PC-3 (cell line): ENCODE measurements at regions of chr9 and their contacts with region 1.

Region 1: GRCh38 chr9:107557231-107557990 is 67.8 kb upstream of the KLF4 start:
- DNase-seq: peak; percentile 88
- ATAC-seq: peak; percentile 88
- H3K4me3 ChIP-seq: peak overlapping the region; percentile 21; the same call in 1 of the 2 replicates
- H3K27ac ChIP-seq: peak overlapping the region; percentile 98
- H3K4me1 ChIP-seq: peaks cover 25% of the 10 kb centered on the region
- H3K27me3 ChIP-seq: no peaks in the 10 kb centered on the region
- CTCF ChIP-seq: no peak

Region 2: GRCh38 chr9:107597743-107598217 is 40.4 kb after region 1 on chr9:
- CTCF ChIA-PET with region 1: no interaction called
- POLR2A ChIA-PET with region 1: no interaction called
- intact Hi-C with region 1: no loop called
- DNase-seq: no peak
- ATAC-seq: no peak
- H3K4me3 ChIP-seq: no peak overlapping the region
- H3K27ac ChIP-seq: no peak overlapping the region
- H3K4me1 ChIP-seq: no peaks in the 10 kb centered on the region
- H3K27me3 ChIP-seq: no peaks in the 10 kb centered on the region
- CTCF ChIP-seq: no peak

Region 3: GRCh38 chr9:107612136-107612535 is 54.7 kb after region 1 on chr9:
- CTCF ChIA-PET with region 1: no interaction called
- POLR2A ChIA-PET with region 1: interaction called, 14 read pairs
- intact Hi-C with region 1: no loop called
- DNase-seq: no peak
- ATAC-seq: no peak
- H3K4me3 ChIP-seq: no peak overlapping the region
- H3K27ac ChIP-seq: no peak overlapping the region
- H3K4me1 ChIP-seq: no peaks in the 10 kb centered on the region
- H3K27me3 ChIP-seq: no peaks in the 10 kb centered on the region
- CTCF ChIP-seq: no peak